CD8-positive, alpha-beta T cell (primary cell): ENCODE measurements at regions of chr2 and their contacts with region 1.

Region 1: GRCh38 chr2:37389989-37390765 is 45.7 kb downstream of the QPCT start:
- DNase-seq: peak in 8 of 9 experiments; percentile 28 to 89 (median 64)
- ATAC-seq: peak; percentile 93
- H3K4me3 ChIP-seq: no peak overlapping the region
- H3K4me3 Mint-ChIP-seq: peak overlapping the region; percentile 0
- H3K27ac ChIP-seq: peak overlapping the region in 1 of 2 experiments; percentile 67
- H3K27ac Mint-ChIP-seq: peak overlapping the region; percentile 80
- H3K4me1 ChIP-seq: peaks cover 23% of the 10 kb centered on the region
- H3K4me1 Mint-ChIP-seq: peaks cover 3% of the 10 kb centered on the region
- H3K27me3 ChIP-seq: no peaks in the 10 kb centered on the region
- H3K27me3 Mint-ChIP-seq: no peaks in the 10 kb centered on the region
- CTCF ChIP-seq: no peak

Region 2: DNA sequence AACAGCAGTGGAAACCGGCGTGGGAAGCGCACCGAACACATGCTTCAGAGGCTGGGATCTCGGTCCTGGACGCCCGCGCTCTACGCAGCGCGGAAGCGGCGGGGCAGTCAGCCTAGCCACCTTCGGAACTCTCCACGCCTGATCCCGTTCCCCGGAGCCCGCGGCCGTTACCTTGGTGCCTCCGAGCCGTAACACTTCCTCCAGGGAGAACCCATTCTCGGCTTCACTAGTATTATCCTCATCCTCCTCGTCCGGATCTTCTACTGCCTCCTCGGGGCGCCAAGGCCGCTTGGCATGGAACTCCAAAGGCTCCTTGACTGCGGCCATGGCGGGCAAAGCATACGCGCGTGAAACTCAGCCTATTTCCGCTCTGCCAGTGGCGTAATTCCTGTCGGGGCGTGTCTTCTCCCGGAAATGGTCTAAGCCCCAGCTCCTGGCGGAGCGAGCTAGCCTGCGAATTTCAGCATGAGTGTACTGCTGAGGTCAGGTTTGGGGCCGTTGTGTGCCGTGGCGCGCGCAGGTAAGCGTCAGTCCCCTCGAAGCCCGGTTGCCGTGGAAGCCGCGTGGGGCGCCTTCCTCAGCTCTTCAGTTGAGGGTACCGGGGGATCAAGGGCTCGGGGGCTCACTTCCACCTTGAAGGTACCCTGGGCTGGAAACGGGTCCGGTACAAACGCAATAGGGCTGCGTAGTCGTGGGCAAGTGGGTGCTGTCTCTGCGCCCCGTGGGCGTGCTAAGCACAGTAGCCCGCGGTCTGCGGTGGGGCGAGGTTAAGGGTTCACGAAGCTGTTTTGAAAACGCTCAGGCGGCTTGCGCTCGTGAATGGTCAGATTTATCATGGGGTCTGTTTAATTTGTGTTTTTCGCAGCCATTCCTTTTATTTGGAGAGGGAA is 158.7 kb before region 1 on chr2 and contains the starts of genes CEBPZ and NDUFAF7:
- CTCF ChIA-PET with region 1: no interaction called
- POLR2A ChIA-PET with region 1: no interaction called
- intact Hi-C with region 1: loop called in 1 of 2 experiments (anchors 5 kb)
- DNase-seq: peak; percentile 73 to 95 (median 87)
- ATAC-seq: peak; percentile 86
- H3K4me3 ChIP-seq: peak within 1 kb of the TSS; percentile 83 to 92
- H3K4me3 Mint-ChIP-seq: no peak within 1 kb of the TSS
- H3K27ac ChIP-seq: peak within 1 kb of the TSS; percentile 93 to 94
- H3K27ac Mint-ChIP-seq: no peak within 1 kb of the TSS
- H3K4me1 ChIP-seq: peaks cover 45% of the 10 kb centered on the region
- H3K4me1 Mint-ChIP-seq: peaks cover 44% of the 10 kb centered on the region
- H3K27me3 ChIP-seq: no peaks in the 10 kb centered on the region
- H3K27me3 Mint-ChIP-seq: no peaks in the 10 kb centered on the region
- CTCF ChIP-seq: no peak
- total RNA-seq, gene CEBPZ: 132 to 146 TPM
- total RNA-seq, gene NDUFAF7: 26.0 to 28.4 TPM

Region 3: DNA sequence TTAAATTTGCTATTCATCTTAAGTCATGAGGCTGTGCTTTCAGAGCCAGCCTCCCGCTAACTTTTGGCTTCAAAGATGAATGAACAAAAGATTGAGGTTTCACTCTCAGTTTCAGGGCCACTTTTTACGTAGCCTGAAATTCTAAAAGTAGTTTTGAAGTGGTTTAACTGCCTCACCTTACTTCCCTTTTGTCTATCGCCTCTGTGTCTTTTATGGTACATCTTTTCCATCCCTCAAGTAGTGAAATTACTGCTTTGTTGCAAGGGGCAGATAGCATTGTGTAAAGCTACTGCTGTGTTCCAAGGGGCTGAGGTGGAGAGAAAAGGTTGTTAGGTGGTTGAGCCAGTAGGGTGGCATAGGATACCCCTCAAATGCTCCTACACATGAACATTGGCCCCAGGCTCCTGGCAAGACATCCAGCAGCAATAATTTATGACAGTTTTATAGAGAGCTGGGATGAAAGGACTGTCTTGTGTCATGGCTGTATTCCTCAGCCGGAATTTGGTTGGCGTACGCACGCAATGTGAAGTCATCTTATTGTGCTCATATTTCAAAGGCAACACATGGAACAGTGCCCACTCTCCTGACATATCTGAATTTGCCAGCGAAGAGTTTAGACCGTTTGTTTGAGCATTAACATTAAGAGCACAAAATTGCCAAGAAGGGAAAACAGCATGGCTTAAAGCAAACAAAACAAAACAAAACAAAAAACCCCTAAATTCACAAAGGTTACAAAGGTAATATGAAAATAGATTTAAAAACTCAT is 13.6 kb before region 1 on chr2:
- CTCF ChIA-PET with region 1: interaction called, 12 read pairs
- POLR2A ChIA-PET with region 1: interaction called, 3 read pairs
- intact Hi-C with region 1: no loop called
- DNase-seq: peak in 4 of 9 experiments; percentile 28 to 69 (median 53)
- ATAC-seq: peak; percentile 76
- H3K4me3 ChIP-seq: no peak overlapping the region
- H3K4me3 Mint-ChIP-seq: peak overlapping the region; percentile 16
- H3K27ac ChIP-seq: no peak overlapping the region
- H3K27ac Mint-ChIP-seq: peak overlapping the region; percentile 33
- H3K4me1 ChIP-seq: peaks cover 15% of the 10 kb centered on the region
- H3K4me1 Mint-ChIP-seq: peaks cover 18% of the 10 kb centered on the region
- H3K27me3 ChIP-seq: peaks cover 2 to 3% of the 10 kb centered on the region in 2 experiments
- H3K27me3 Mint-ChIP-seq: peaks cover 51% of the 10 kb centered on the region
- CTCF ChIP-seq: no peak

Region 4: GRCh38 chr2:37832590-37833197 is 442.5 kb after region 1 on chr2:
- CTCF ChIA-PET with region 1: interaction called, 238 read pairs
- POLR2A ChIA-PET with region 1: no interaction called
- intact Hi-C with region 1: no loop called
- DNase-seq: peak; percentile 62 to 91 (median 84)
- ATAC-seq: peak; percentile 78
- H3K4me3 ChIP-seq: no peak overlapping the region
- H3K4me3 Mint-ChIP-seq: no peak overlapping the region
- H3K27ac ChIP-seq: no peak overlapping the region
- H3K27ac Mint-ChIP-seq: no peak overlapping the region
- H3K4me1 ChIP-seq: no peaks in the 10 kb centered on the region
- H3K4me1 Mint-ChIP-seq: peaks cover 5% of the 10 kb centered on the region
- H3K27me3 ChIP-seq: no peaks in the 10 kb centered on the region
- H3K27me3 Mint-ChIP-seq: no peaks in the 10 kb centered on the region
- CTCF ChIP-seq: peak; percentile 90

Region 5: DNA sequence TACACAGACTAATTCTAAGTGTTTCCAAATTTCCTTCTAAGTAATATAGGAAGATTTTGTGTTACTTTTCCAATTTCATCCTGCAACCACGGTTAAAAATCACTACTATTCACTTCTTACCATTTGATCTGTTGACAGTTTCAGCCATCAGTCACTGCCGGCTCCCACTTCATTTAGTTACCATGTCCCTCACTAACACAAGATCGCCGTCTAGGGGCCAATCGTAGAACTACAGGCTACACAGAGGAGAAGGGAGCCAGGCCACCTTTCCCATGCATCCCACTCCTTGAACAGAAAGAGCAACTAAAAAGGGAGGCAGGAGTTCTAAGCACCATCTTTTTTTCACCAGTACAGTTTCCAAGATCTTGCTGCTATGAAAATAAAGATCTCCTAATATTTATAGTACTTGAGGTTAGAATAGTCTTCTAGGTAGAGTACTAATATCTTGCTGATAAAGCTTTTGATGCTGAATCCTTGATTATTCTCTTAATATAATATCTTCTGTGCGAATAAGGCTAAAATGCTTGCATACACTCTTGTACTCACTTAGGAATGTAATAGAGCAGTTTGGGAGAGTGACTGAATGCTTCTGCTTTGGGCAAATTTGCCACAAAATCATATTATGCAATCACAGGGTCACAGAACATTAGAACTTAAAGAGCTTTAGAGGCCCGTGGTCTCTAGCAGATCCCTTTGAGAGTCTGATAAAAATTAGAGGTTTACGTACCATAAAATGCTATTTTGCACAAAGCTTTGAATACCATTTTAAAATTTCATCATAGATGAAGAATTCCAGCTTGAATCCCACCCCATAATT is 725.2 kb after region 1 on chr2:
- CTCF ChIA-PET with region 1: no interaction called
- POLR2A ChIA-PET with region 1: no interaction called
- intact Hi-C with region 1: loop called in 1 of 2 experiments (anchors 10 kb)
- DNase-seq: peak; percentile 28 to 66 (median 51)
- ATAC-seq: peak; percentile 48
- H3K4me3 ChIP-seq: no peak overlapping the region
- H3K4me3 Mint-ChIP-seq: no peak overlapping the region
- H3K27ac ChIP-seq: no peak overlapping the region
- H3K27ac Mint-ChIP-seq: no peak overlapping the region
- H3K4me1 ChIP-seq: no peaks in the 10 kb centered on the region
- H3K4me1 Mint-ChIP-seq: no peaks in the 10 kb centered on the region
- H3K27me3 ChIP-seq: no peaks in the 10 kb centered on the region
- H3K27me3 Mint-ChIP-seq: peaks cover 24% of the 10 kb centered on the region
- CTCF ChIP-seq: peak; percentile 88

Region 6: DNA sequence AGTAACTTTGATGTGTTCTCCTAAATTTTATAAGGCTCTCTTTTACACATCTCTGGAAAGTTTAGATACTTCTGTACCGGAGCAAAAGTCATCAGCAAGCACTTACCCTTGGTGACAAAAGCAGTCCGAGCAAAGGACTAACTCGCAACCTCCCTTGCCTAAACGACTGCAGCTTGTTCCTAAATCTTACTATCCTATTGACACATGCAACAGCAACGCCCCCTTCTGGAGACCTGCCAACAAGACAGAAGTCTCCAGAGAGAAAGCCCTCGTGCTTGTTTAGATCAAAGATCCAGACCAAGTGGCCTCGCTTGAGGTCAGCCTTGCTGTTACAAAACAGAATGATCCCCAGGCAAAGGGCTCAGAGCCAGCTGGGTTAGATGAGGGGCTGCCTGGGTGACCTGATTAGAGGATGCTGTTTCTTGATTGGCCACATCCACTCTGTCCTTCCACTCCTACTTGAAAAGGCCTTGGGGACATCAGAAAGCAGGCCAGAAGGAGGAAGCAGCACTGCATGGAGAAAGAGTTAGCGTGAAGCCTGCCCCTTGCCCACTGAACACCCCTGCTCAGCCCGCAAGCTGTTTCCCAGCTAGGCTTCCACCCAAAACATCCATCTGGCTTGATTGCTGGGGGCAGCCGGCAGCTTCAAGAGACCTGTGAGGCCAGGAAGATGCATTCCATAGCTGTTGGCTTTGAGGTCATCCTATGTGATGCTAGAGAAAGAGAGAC is 1118.3 kb after region 1 on chr2:
- CTCF ChIA-PET with region 1: no interaction called
- POLR2A ChIA-PET with region 1: no interaction called
- intact Hi-C with region 1: loop called in 1 of 2 experiments (anchors 10 kb)
- DNase-seq: peak; percentile 61 to 83 (median 78)
- ATAC-seq: peak; percentile 80
- H3K4me3 ChIP-seq: no peak overlapping the region
- H3K4me3 Mint-ChIP-seq: no peak overlapping the region
- H3K27ac ChIP-seq: no peak overlapping the region
- H3K27ac Mint-ChIP-seq: no peak overlapping the region
- H3K4me1 ChIP-seq: no peaks in the 10 kb centered on the region
- H3K4me1 Mint-ChIP-seq: peaks cover 2% of the 10 kb centered on the region
- H3K27me3 ChIP-seq: no peaks in the 10 kb centered on the region
- H3K27me3 Mint-ChIP-seq: peaks cover 5% of the 10 kb centered on the region
- CTCF ChIP-seq: peak; percentile 75